BJ (cell line): ENCODE measurements at regions of chr17 and their contacts with region 1.

Region 1: GRCh38 chr17:76408052-76408849 is 23.8 kb downstream of the SPHK1 start:
- DNase-seq: no peak
- H3K4me3 ChIP-seq: no peak overlapping the region
- H3K27me3 ChIP-seq: no peaks in the 10 kb centered on the region
- CTCF ChIP-seq: peak; percentile 91

Region 2: GRCh38 chr17:76141212-76142038 is 266.8 kb before region 1 on chr17 and contains the start of gene FOXJ1:
- CTCF ChIA-PET with region 1: no interaction called
- POLR2A ChIA-PET with region 1: no interaction called
- DNase-seq: peak; percentile 40
- H3K4me3 ChIP-seq: peak within 1 kb of the TSS; percentile 52
- H3K27me3 ChIP-seq: peaks cover 30% of the 10 kb centered on the region
- CTCF ChIP-seq: no peak
- polyA plus RNA-seq, gene FOXJ1: not detected in 2 replicates

Region 3: DNA sequence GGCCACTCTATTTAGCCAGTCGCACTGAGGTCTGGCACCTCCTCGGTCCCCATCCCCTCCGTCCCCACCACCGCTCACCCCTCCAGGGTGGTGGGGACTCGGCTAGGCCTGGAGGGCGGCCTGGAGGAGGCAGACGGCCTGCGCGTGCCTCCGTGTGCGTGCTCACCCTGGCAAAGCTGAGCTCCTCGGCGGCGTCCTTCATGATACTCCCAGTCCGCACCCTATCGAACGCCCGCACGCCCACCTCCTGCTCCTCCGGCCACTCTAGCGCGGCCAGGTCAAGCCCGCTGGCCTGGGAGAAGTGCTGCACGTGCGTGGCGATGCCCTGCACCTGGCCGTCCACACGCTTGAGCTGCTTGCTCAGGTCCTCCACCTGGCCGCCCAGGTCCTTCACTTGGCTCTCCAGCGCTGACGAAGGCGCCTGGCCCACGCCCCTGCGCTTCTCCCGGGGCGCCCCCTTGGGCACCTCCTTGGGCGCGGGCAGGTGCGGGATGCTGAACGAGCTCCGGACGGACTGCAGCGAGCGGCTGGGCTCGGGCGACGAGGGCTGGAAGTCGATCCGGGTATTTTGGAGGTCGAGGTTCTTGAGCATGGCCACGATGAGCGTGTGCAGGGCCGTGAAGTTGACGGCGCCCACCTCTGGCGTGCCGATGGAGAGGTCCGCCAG is 100.8 kb before region 1 on chr17:
- CTCF ChIA-PET with region 1: interaction called, 16 read pairs
- POLR2A ChIA-PET with region 1: no interaction called
- DNase-seq: no peak
- H3K4me3 ChIP-seq: no peak overlapping the region
- H3K27me3 ChIP-seq: no peaks in the 10 kb centered on the region
- CTCF ChIP-seq: no peak

Region 4: GRCh38 chr17:76371656-76372628 is 36.3 kb before region 1 on chr17:
- CTCF ChIA-PET with region 1: no interaction called
- POLR2A ChIA-PET with region 1: no interaction called
- DNase-seq: peak; percentile 93
- H3K4me3 ChIP-seq: no peak overlapping the region
- H3K27me3 ChIP-seq: no peaks in the 10 kb centered on the region
- CTCF ChIP-seq: no peak

Region 5: GRCh38 chr17:76452660-76453430 is 44.6 kb after region 1 on chr17 and contains the start of gene UBE2O:
- CTCF ChIA-PET with region 1: interaction called, 128 read pairs
- POLR2A ChIA-PET with region 1: no interaction called
- DNase-seq: no peak
- H3K4me3 ChIP-seq: peak within 1 kb of the TSS; percentile 83
- H3K27me3 ChIP-seq: peaks cover 2% of the 10 kb centered on the region; the same call in 1 of the 2 replicates
- CTCF ChIP-seq: peak; percentile 59
- polyA plus RNA-seq, gene UBE2O: 7.0 and 11.1 TPM in 2 replicates